A549 (cell line): ENCODE measurements at regions of chr12 and their contacts with region 1.

Region 1: GRCh38 chr12:62934799-62935674 is at the start of gene PPM1H:
- DNase-seq: peak; percentile 86 to 96
- ATAC-seq: peak; percentile 87 to 90
- H3K4me3 ChIP-seq: peak within 1 kb of the TSS; percentile 70
- H3K27ac ChIP-seq: peak within 1 kb of the TSS; percentile 79 to 95
- H3K4me1 ChIP-seq: peaks cover 24% of the 10 kb centered on the region
- CTCF ChIP-seq: peak; percentile 61
- EP300 ChIP-seq: no peak
- POLR2A ChIP-seq: peak; percentile 87
- RAD21 ChIP-seq: peak; percentile 30 to 43
- polyA plus RNA-seq, gene PPM1H: 7.8 and 7.9 TPM in 2 replicates

Region 2: GRCh38 chr12:62268956-62269355 is 666.1 kb before region 1 on chr12:
- CTCF ChIA-PET with region 1: no interaction called
- POLR2A ChIA-PET with region 1: no interaction called
- DNase-seq: peak in 1 of 2 experiments; percentile 11
- ATAC-seq: peak in 1 of 2 experiments; percentile 58; a peak in 3 of 6 replicates
- H3K4me3 ChIP-seq: no peak overlapping the region
- H3K27ac ChIP-seq: no peak overlapping the region
- H3K4me1 ChIP-seq: peaks cover 27% of the 10 kb centered on the region; the same call in 2 of the 3 replicates
- CTCF ChIP-seq: no peak
- EP300 ChIP-seq: no peak
- POLR2A ChIP-seq: no peak
- RAD21 ChIP-seq: no peak

Region 3: DNA sequence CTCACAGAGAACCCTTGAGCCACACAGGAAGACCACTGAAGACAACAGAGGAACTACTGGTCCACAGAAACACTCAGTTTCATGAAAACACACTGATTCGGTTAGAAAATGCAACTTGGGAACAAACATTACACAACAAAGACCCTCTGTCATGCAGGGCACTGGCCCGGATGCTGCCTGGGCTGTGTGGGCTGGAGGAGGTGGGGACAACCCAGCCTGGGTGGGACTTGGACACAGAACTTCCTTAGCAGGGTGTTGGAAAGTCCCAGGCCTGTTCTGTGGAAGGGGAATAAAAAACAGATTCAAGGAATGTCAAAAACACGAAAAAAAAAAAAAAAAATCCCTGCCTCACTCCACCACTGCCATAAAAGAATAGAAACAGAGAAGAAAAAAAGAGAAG is 287.5 kb before region 1 on chr12:
- CTCF ChIA-PET with region 1: no interaction called
- POLR2A ChIA-PET with region 1: no interaction called
- DNase-seq: no peak
- ATAC-seq: no peak
- H3K4me3 ChIP-seq: no peak overlapping the region
- H3K27ac ChIP-seq: no peak overlapping the region; a peak in 1 of 6 replicates
- H3K4me1 ChIP-seq: peaks cover 10% of the 10 kb centered on the region
- CTCF ChIP-seq: no peak
- EP300 ChIP-seq: no peak
- POLR2A ChIP-seq: no peak
- RAD21 ChIP-seq: no peak

Region 4: GRCh38 chr12:62860501-62861411 is 74.3 kb before region 1 on chr12:
- CTCF ChIA-PET with region 1: interaction called, 12 read pairs
- POLR2A ChIA-PET with region 1: interaction called, 18 read pairs
- DNase-seq: no peak
- ATAC-seq: no peak
- H3K4me3 ChIP-seq: no peak overlapping the region
- H3K27ac ChIP-seq: peak overlapping the region; percentile 8 to 80; a peak in 3 of 6 replicates
- H3K4me1 ChIP-seq: peaks cover 53% of the 10 kb centered on the region
- CTCF ChIP-seq: no peak
- EP300 ChIP-seq: no peak
- POLR2A ChIP-seq: no peak
- RAD21 ChIP-seq: no peak

Region 5: DNA sequence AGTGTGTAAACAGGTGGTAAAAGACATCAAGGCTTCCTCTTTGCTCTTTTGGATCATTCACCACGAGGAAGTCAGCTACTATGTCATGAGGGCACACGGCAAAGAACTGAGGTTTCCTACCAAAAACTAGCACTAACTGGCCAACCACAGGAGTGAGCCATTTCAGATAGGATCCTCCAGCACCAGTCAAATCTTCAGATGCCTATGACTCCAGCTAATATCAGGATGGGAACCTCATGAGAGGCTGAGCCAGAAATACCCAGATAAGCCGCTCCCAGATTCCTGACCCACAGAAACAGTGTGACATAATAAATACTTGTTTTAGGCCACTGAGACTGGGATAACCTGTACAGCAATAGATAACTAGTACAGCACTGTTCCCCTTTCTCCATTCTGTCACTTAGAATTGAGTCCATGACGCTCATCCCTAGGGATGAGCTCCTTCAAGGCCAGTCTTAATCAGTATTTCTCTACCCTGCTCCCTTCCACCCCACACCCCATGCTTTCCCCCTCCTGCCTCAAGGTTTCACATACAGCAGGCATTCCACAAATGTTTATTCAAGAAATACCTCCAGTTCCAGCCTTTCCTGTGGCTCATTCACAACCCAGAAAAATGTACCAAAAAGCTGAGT is 68.5 kb before region 1 on chr12:
- CTCF ChIA-PET with region 1: interaction called, 9 read pairs
- POLR2A ChIA-PET with region 1: interaction called, 18 read pairs
- DNase-seq: peak; percentile 58 to 85
- ATAC-seq: peak; percentile 91 to 93
- H3K4me3 ChIP-seq: no peak overlapping the region
- H3K27ac ChIP-seq: peak overlapping the region; percentile 72 to 84
- H3K4me1 ChIP-seq: peaks cover 68% of the 10 kb centered on the region
- CTCF ChIP-seq: no peak
- EP300 ChIP-seq: no peak; a peak in 1 of 5 replicates
- POLR2A ChIP-seq: no peak
- RAD21 ChIP-seq: 0 out of 5 replicates have a peak, but pooled peaks have one; percentile 11 to 17